ENCODE measurements at regions of chr3 and their contacts with region 1.

Region 1: GRCh38 chr3:42080452-42080891 is 10.7 kb upstream of the TRAK1 start:
- DNase-seq: peak; percentile 56
- ATAC-seq: peak; percentile 93
- H3K4me3 ChIP-seq: peak overlapping the region in 1 of 5 experiments; percentile 7
- H3K4me3 Mint-ChIP-seq: peak overlapping the region; percentile 87
- H3K27ac ChIP-seq: peak overlapping the region; percentile 65 to 84
- H3K27ac Mint-ChIP-seq: peak overlapping the region; percentile 99
- H3K4me1 ChIP-seq: peaks cover 48 to 57% of the 10 kb centered on the region in 2 donors
- H3K4me1 Mint-ChIP-seq: peaks cover 77% of the 10 kb centered on the region
- H3K27me3 ChIP-seq: no peaks in the 10 kb centered on the region
- H3K27me3 Mint-ChIP-seq: no peaks in the 10 kb centered on the region
- CTCF ChIP-seq: no peak

Region 2: GRCh38 chr3:42043027-42043796 is 37.3 kb before region 1 on chr3:
- CTCF ChIA-PET with region 1: interaction called, 3 read pairs
- POLR2A ChIA-PET with region 1: interaction called, 10 read pairs
- intact Hi-C with region 1: loop called (anchors 5 kb)
- DNase-seq: no peak
- ATAC-seq: no peak
- H3K4me3 ChIP-seq: no peak overlapping the region
- H3K4me3 Mint-ChIP-seq: peak overlapping the region; percentile 35
- H3K27ac ChIP-seq: peak overlapping the region in 1 of 2 donors; percentile 19
- H3K27ac Mint-ChIP-seq: peak overlapping the region; percentile 72
- H3K4me1 ChIP-seq: peaks cover 71 to 82% of the 10 kb centered on the region in 2 donors
- H3K4me1 Mint-ChIP-seq: peaks cover 74% of the 10 kb centered on the region
- H3K27me3 ChIP-seq: no peaks in the 10 kb centered on the region
- H3K27me3 Mint-ChIP-seq: no peaks in the 10 kb centered on the region
- CTCF ChIP-seq: no peak

Region 3: DNA sequence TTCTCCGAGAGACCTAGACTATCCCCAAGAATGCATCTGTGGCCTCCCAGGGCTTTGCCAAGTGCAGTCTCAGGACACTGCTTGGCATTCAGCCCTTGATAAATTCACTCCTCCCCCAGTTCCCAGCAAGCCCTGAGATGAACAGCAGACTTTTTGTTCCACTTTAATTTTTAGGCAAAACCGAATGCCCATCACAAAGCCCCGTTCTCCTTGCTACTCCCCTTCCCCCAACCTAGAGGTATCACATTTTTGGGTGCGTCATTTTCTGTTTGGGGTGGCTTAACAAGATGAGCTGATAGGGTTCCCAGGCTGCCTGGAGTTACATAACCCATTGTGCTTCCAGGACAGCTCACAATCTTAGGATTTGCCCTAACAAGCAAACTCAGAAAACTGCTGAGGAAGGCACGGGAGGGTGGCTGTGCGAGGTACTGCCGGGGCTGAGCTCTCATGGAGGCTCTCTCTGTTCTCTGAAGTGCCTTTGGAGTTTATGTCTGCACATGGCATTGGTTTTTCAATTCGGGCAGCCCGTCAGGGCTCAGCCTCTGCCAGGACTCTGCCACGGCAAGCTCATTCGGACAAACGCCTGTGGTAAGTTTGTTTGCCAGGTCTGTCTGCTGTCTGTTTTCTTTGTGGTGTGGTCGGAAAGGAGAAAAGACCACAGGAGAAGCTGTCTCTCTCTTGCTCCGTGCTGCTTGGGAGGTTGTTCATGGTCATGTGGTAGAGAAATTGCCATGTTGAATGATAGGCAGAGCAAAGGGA is 10.7 kb after region 1 on chr3 and contains the start of gene TRAK1:
- CTCF ChIA-PET with region 1: interaction called, 5 read pairs
- POLR2A ChIA-PET with region 1: no interaction called
- intact Hi-C with region 1: loop called (anchors 2 kb)
- DNase-seq: peak; percentile 6
- ATAC-seq: no peak
- H3K4me3 ChIP-seq: no peak within 1 kb of the TSS
- H3K4me3 Mint-ChIP-seq: peak within 1 kb of the TSS; percentile 13
- H3K27ac ChIP-seq: peak within 1 kb of the TSS in 1 of 2 donors; percentile 60
- H3K27ac Mint-ChIP-seq: peak within 1 kb of the TSS; percentile 84
- H3K4me1 ChIP-seq: peaks cover 33 to 34% of the 10 kb centered on the region in 2 donors
- H3K4me1 Mint-ChIP-seq: peaks cover 81% of the 10 kb centered on the region
- H3K27me3 ChIP-seq: no peaks in the 10 kb centered on the region
- H3K27me3 Mint-ChIP-seq: no peaks in the 10 kb centered on the region
- CTCF ChIP-seq: no peak
- total RNA-seq, gene TRAK1: 129 and 134 TPM in 2 replicates